HepG2 (cell line): ENCODE measurements at regions of chr16 and their contacts with region 1.

Region 1: GRCh38 chr16:68396481-68396880 is 51.8 kb downstream of the SMPD3 start:
- DNase-seq: peak; percentile 54
- ATAC-seq: peak; percentile 88
- H3K4me3 ChIP-seq: no peak overlapping the region
- H3K27ac ChIP-seq: no peak overlapping the region
- H3K4me1 ChIP-seq: no peaks in the 10 kb centered on the region
- H3K27me3 ChIP-seq: peaks cover 4 to 21% of the 10 kb centered on the region in 2 experiments
- CTCF ChIP-seq: peak; percentile 60
- EP300 ChIP-seq: no peak
- POLR2A ChIP-seq: no peak
- RAD21 ChIP-seq: peak; percentile 52

Region 2: GRCh38 chr16:68512183-68512582 is 115.7 kb after region 1 on chr16:
- CTCF ChIA-PET with region 1: interaction called, 34 read pairs
- POLR2A ChIA-PET with region 1: no interaction called
- in situ Hi-C with region 1: loop called (anchors 5 kb)
- intact Hi-C with region 1: loop called (anchors 1 kb)
- DNase-seq: no peak
- ATAC-seq: no peak
- H3K4me3 ChIP-seq: no peak overlapping the region
- H3K27ac ChIP-seq: no peak overlapping the region
- H3K4me1 ChIP-seq: peaks cover 19% of the 10 kb centered on the region
- H3K27me3 ChIP-seq: peaks cover 3 to 22% of the 10 kb centered on the region in 2 experiments; a peak in 4 of 5 replicates
- CTCF ChIP-seq: no peak
- EP300 ChIP-seq: no peak
- POLR2A ChIP-seq: no peak
- RAD21 ChIP-seq: no peak